Right ventricle myocardium inferior (tissue), 1 donor: ENCODE measurements at regions of chr11 and their contacts with region 1.

Region 1: DNA sequence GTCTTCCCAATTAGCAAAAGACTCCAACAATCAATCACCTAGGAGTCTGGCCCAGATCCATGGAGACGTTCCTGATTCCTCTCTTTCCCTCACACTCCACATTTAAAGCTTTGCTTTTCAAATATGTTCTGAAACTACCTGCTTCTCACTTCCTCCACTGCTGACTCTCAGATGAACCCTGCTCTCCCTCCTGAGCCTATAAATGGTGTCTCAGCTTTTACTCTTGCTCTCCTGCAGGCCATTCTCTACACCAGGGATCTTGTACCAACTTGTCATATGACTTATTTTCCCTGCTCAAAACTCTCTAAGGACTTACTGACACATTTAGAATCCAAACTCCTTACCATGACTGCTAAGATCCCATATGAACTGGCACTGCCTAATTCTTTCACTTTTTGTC is 138.4 kb upstream of the DDI1 start:
- DNase-seq: no peak
- ATAC-seq: no peak

Region 2: GRCh38 chr11:103730131-103730940 is 167.7 kb before region 1 on chr11:
- intact Hi-C with region 1: loop called (anchors 5 kb)
- DNase-seq: no peak
- ATAC-seq: no peak

Region 3: GRCh38 chr11:103789952-103790351 is 108.1 kb before region 1 on chr11:
- intact Hi-C with region 1: no loop called
- DNase-seq: no peak
- ATAC-seq: no peak